WTC11 (cell line): ENCODE measurements at regions of chr1 and their contacts with region 1.

Region 1: DNA sequence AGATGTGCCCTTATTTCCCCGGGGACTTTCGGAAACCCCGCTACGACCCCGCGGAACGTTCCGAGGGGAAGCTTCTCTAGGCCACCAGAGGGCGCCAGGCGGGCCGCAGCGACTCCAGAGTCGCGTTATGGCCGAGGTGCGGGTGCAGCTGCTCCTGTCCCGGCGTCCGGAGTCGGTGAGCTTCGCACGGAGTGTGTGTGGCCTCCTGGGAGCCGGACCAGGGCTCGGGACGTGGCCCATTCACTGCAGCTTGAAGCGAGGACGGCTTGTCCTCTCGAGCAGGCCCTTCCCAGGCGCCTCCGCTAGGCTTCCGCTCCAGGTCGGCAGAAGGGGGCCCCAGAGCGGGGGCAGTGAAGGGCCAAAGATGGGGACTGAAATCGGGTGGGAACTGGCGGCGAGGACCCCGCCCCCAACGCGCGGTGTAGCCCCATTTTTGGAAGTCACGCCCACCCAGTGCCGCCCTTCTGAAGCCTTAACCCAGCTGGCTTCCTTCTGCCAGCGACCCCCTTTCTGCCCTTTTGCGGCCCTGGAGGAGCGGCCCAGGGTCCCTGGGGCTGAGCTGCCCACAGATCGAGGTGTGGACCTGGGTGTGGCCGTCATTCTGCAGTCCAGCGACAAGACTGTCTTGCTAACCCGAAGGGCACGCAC is at the start of gene NUDT17:
- DNase-seq: peak; percentile 88
- ATAC-seq: peak; percentile 78
- H3K4me3 Mint-ChIP-seq: no peak within 1 kb of the TSS
- H3K27ac Mint-ChIP-seq: no peak within 1 kb of the TSS
- H3K4me1 Mint-ChIP-seq: peaks cover 3% of the 10 kb centered on the region; the same call in 1 of the 2 replicates
- H3K27me3 Mint-ChIP-seq: no peaks in the 10 kb centered on the region
- CTCF ChIP-seq: peak; percentile 82
- total RNA-seq, gene NUDT17: 2.7 to 3.5 TPM (median 3.3 TPM) in 3 replicates

Region 2: GRCh38 chr1:145601593-145601992 is 244.0 kb before region 1 on chr1:
- CTCF ChIA-PET with region 1: no interaction called
- POLR2A ChIA-PET with region 1: no interaction called
- DNase-seq: no peak
- ATAC-seq: no peak
- H3K4me3 Mint-ChIP-seq: no peak overlapping the region
- H3K27ac Mint-ChIP-seq: no peak overlapping the region
- H3K4me1 Mint-ChIP-seq: peaks cover 7% of the 10 kb centered on the region
- H3K27me3 Mint-ChIP-seq: no peaks in the 10 kb centered on the region
- CTCF ChIP-seq: no peak

Region 3: GRCh38 chr1:145782166-145783099 is 63.2 kb before region 1 on chr1:
- CTCF ChIA-PET with region 1: no interaction called
- POLR2A ChIA-PET with region 1: no interaction called
- DNase-seq: no peak
- ATAC-seq: no peak
- H3K4me3 Mint-ChIP-seq: no peak overlapping the region
- H3K27ac Mint-ChIP-seq: 0 out of 2 replicates have a peak overlapping the region, but pooled peaks have one; percentile 44
- H3K4me1 Mint-ChIP-seq: peaks cover 6% of the 10 kb centered on the region; the same call in 1 of the 2 replicates
- H3K27me3 Mint-ChIP-seq: no peaks in the 10 kb centered on the region
- CTCF ChIP-seq: no peak

Region 4: DNA sequence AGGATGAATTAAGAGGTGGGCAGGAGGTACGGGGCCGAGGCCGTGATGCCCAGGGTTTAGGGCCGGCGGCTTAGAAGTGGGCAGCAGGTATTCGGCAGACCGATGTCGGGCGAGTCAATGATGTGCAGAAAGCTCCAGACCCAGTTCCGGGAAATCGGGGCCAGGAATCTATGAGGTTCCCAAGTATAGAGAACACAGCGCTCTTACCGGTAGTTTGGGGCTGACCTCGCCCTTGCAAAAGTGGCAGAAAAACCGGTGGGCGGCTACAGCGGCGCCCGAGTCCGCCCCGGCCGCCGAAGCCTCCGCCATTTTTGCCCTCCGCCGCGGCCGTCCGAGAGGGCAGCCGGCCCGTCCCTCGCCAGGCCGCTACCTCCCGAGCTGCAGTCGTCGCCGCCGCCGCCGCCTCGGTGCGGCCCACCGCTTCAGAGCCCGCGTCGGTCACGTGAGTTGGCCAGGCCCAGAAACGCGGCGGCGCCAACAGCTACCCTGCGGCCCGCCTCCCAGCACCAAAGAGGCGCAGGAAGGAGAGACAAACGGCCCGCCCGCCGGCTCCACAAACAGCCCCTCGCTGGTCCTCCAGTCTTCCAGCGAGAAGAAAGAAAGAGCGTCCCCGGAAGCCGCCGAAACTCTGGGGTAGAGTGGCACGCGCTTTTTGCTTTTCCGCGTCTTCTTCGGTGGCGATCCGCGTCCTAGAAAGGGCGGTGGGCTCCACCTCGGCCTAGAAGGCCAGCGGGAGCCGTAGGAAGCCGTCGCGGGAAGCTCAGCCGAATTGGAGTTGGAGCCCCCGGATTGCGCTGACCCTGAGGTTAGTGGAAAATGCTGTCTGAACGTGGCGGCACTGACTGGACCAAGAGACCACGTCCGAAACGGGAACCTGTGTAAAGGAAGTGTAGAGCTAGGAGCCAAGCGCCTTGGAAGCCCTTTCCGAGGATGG is 21.8 kb before region 1 on chr1 and contains the starts of genes POLR3C and RNF115:
- CTCF ChIA-PET with region 1: interaction called, 24 read pairs
- POLR2A ChIA-PET with region 1: interaction called, 7 read pairs
- DNase-seq: peak; percentile 92
- ATAC-seq: peak; percentile 95
- H3K4me3 Mint-ChIP-seq: peak within 1 kb of the TSS; percentile 93
- H3K27ac Mint-ChIP-seq: peak within 1 kb of the TSS; percentile 99
- H3K4me1 Mint-ChIP-seq: peaks cover 5% of the 10 kb centered on the region
- H3K27me3 Mint-ChIP-seq: no peaks in the 10 kb centered on the region
- CTCF ChIP-seq: no peak
- total RNA-seq, gene POLR3C: 20.2 to 24.9 TPM (median 22.7 TPM) in 3 replicates
- total RNA-seq, gene RNF115: 8.1 to 9.2 TPM (median 9.0 TPM) in 3 replicates

Region 5: GRCh38 chr1:145879775-145880174 is 34.1 kb after region 1 on chr1:
- CTCF ChIA-PET with region 1: interaction called, 39 read pairs
- POLR2A ChIA-PET with region 1: no interaction called
- DNase-seq: no peak
- ATAC-seq: peak; percentile 73
- H3K4me3 Mint-ChIP-seq: no peak overlapping the region
- H3K27ac Mint-ChIP-seq: peak overlapping the region; percentile 76
- H3K4me1 Mint-ChIP-seq: peaks cover 21% of the 10 kb centered on the region
- H3K27me3 Mint-ChIP-seq: peaks cover 36% of the 10 kb centered on the region
- CTCF ChIP-seq: no peak

Region 6: GRCh38 chr1:145901318-145902021 is 55.8 kb after region 1 on chr1:
- CTCF ChIA-PET with region 1: interaction called, 36 read pairs
- POLR2A ChIA-PET with region 1: no interaction called
- DNase-seq: peak; percentile 37
- ATAC-seq: peak; percentile 90
- H3K4me3 Mint-ChIP-seq: no peak overlapping the region
- H3K27ac Mint-ChIP-seq: no peak overlapping the region
- H3K4me1 Mint-ChIP-seq: no peaks in the 10 kb centered on the region
- H3K27me3 Mint-ChIP-seq: peaks cover 14% of the 10 kb centered on the region
- CTCF ChIP-seq: no peak

Region 7: DNA sequence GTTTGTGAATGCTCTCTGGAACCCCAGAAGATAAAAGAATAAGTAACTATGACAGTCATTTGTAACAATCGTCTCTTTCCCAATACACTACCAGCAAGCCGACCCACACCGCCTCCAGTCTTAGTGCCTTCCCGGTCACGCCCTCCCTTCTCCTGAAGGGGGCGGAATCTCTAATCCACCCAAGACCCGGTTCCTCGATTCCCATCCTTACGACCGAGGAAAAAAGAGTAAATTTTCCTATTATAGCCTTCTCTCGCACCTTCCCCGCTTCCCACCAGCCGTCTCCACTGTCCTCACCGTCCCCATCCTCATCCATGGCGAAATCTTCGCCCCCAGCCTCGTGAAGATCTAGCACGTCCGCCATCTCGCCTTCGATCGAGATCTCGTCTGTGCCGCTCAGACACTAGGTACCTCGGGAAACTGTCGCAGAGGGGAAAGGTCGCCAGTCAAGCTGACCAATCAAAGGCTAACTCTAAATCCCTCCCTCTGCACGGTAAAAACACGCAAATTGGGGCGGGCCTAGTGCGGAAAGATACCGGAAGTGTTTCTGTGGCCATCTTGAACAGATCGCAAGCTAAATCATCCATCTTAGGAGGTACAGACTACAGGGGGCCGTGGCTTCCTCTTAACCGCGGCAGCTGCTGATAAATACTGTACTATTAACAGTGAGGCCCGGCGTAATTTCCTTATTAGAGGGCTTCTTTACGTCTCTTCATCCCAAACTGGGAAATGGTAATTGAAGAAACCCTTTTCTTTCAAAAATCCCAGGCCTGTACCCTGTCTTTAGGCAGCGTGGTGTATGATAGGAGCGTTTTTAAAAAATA is 81.6 kb after region 1 on chr1 and contains the start of gene RBM8A:
- CTCF ChIA-PET with region 1: interaction called, 12 read pairs
- POLR2A ChIA-PET with region 1: interaction called, 3 read pairs
- DNase-seq: peak; percentile 91
- ATAC-seq: peak; percentile 98
- H3K4me3 Mint-ChIP-seq: no peak within 1 kb of the TSS; the same call in none of the 2 replicates
- H3K27ac Mint-ChIP-seq: no peak within 1 kb of the TSS; the same call in 1 of the 2 replicates
- H3K4me1 Mint-ChIP-seq: peaks cover 17% of the 10 kb centered on the region
- H3K27me3 Mint-ChIP-seq: no peaks in the 10 kb centered on the region
- CTCF ChIP-seq: peak; percentile 23; the same call in 1 of the 2 replicates
- total RNA-seq, gene RBM8A: 199 to 215 TPM (median 212 TPM) in 3 replicates

Region 8: DNA sequence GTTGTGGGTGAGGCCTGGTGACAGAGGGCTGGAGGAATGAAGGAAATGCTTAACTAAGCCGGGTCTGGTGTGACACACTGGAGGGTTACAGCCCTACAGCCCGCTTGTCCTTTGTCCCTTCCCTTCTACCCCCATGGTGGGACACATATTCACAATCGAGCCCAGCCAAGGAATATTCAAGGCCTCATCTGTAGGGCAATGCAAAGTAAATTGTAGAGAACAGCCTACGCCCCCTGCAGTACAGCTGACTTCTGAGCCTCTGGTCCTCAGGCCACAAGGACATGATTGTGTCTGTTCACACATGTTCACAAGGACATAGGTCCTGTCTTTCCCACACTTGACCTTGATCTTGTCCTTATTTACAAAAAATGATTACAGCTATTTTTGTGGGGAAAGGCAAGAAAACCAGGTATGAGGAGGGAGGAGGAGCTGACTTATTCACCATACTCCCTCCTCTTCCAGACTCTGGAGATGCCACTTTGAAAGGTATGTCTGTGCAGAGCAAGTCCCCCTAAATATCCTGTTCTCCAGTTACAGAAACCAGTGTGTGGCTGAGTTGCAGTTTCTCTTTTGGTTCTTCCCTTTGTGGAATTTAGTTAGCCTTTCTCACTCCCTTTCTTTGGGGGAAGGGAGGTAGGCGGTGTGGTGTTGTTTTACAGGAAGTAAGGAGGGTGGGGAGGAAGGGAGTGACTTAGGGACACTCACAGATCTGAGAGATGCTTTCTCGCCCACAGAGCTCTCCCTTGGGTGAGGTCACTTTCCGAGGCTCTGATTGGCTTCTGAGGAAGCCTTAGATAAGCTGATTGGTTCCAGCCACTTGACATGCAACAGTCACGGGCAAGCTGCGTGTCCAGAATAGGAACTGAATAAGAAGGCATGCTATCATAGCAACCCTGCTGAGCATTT is 133.5 kb after region 1 on chr1:
- CTCF ChIA-PET with region 1: interaction called, 20 read pairs
- POLR2A ChIA-PET with region 1: interaction called, 6 read pairs
- DNase-seq: peak; percentile 80
- ATAC-seq: peak; percentile 93
- H3K4me3 Mint-ChIP-seq: no peak overlapping the region
- H3K27ac Mint-ChIP-seq: no peak overlapping the region
- H3K4me1 Mint-ChIP-seq: peaks cover 18% of the 10 kb centered on the region
- H3K27me3 Mint-ChIP-seq: no peaks in the 10 kb centered on the region; the same call in 1 of the 2 replicates
- CTCF ChIP-seq: no peak